ENCODE measurements at regions of chr4 and their contacts with region 1.

Region 1: GRCh38 chr4:121726642-121727268 is 30.0 kb upstream of the ANXA5 start:
- DNase-seq: peak; percentile 13
- H3K4me3 Mint-ChIP-seq: no peak overlapping the region
- H3K27ac Mint-ChIP-seq: no peak overlapping the region
- H3K4me1 Mint-ChIP-seq: peaks cover 8% of the 10 kb centered on the region
- H3K27me3 Mint-ChIP-seq: no peaks in the 10 kb centered on the region
- CTCF ChIP-seq: peak; percentile 21

Region 2: DNA sequence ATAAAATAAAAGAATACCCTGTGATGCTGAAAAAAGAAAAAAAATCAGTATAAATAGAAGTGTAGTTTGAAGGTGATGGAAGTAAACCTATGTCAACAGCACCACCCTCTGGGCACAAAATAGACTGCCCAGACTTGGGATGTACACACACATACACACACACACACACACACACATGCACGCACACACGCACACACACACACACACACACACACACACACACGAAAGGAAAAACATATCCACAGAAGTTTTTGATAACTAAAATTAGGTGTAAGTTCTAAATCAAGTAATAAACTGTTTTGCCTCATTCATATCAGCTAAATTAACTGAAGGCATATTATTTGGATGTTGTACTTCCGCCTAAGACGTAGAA is 70.5 kb before region 1 on chr4:
- CTCF ChIA-PET with region 1: no interaction called
- intact Hi-C with region 1: loop called (anchors 5 kb)
- DNase-seq: peak; percentile 32
- H3K4me3 Mint-ChIP-seq: no peak overlapping the region
- H3K27ac Mint-ChIP-seq: peak overlapping the region; percentile 3
- H3K4me1 Mint-ChIP-seq: no peaks in the 10 kb centered on the region
- H3K27me3 Mint-ChIP-seq: no peaks in the 10 kb centered on the region
- CTCF ChIP-seq: no peak

Region 3: GRCh38 chr4:121698236-121698671 is 28.5 kb before region 1 on chr4:
- CTCF ChIA-PET with region 1: no interaction called
- intact Hi-C with region 1: loop called (anchors 2 kb)
- DNase-seq: no peak
- H3K4me3 Mint-ChIP-seq: no peak overlapping the region
- H3K27ac Mint-ChIP-seq: no peak overlapping the region
- H3K4me1 Mint-ChIP-seq: peaks cover 29% of the 10 kb centered on the region
- H3K27me3 Mint-ChIP-seq: no peaks in the 10 kb centered on the region
- CTCF ChIP-seq: no peak

Region 4: GRCh38 chr4:121764707-121765593 is 38.2 kb after region 1 on chr4 and contains the start of gene SMIM43:
- CTCF ChIA-PET with region 1: no interaction called
- intact Hi-C with region 1: no loop called
- DNase-seq: no peak
- H3K4me3 Mint-ChIP-seq: peak within 1 kb of the TSS; percentile 48
- H3K27ac Mint-ChIP-seq: no peak within 1 kb of the TSS
- H3K4me1 Mint-ChIP-seq: no peaks in the 10 kb centered on the region
- H3K27me3 Mint-ChIP-seq: no peaks in the 10 kb centered on the region
- CTCF ChIP-seq: no peak
- total RNA-seq, gene SMIM43: not detected in 2 replicates

Region 5: DNA sequence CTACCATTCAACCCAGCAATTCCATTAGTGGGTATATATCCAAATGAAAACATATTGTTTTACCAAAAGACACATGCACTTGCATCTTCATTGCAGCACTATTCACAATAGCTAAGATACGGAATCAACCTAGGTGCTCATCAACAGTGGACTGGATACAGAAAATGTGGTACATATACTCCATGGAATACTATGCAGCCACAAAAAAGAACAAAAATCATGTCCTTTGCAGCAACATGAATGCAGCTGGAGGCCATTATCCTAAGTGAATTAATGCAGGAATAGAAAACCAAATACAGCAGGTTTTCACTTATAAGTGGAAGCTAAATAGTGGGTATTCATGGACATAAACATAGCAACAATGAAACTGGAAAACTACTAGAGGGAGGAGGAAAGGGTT is 181.6 kb after region 1 on chr4:
- CTCF ChIA-PET with region 1: no interaction called
- intact Hi-C with region 1: no loop called
- DNase-seq: no peak
- H3K4me3 Mint-ChIP-seq: no peak overlapping the region
- H3K27ac Mint-ChIP-seq: no peak overlapping the region
- H3K4me1 Mint-ChIP-seq: no peaks in the 10 kb centered on the region
- H3K27me3 Mint-ChIP-seq: no peaks in the 10 kb centered on the region
- CTCF ChIP-seq: no peak

Measured in Calu3 (cell line).